ENCODE measurements at regions of chrX and their contacts with region 1.

Region 1: DNA sequence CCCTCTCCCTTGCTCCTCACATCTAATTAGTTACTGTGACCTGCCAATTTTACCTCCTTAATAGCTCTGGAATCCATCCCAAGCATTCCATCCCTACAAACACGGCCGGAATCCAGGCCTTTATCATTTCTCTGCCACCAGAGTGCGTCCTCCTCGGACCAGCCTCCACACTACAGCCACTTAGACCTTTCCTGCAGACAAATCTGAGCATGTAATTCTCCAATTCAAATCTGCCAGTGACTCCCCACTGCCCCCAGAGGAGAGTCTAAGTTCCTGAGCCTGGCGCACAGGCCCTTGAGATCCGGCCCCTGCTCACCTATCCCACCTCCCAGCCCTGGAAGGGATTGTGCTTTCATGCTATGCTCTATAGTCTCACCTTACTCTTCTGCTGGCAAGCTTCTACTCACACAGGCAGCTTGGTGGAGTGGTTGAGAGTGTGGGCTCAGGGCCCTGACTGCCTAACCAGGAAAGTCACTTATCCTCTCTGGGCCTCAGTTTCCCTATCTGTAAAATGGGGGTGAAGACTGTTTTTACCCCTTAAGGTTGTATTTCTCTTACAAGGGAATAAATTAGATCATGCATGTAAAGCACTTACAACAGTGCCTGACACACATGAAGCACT is 31.2 kb downstream of the PJA1 start:
- DNase-seq: no peak

Region 2: GRCh38 chrX:69291116-69291515 is 157.1 kb after region 1 on chrX:
- intact Hi-C with region 1: loop called (anchors 5 to 10 kb)
- DNase-seq: no peak

Measured in posterior vena cava (tissue), 2 donors.